ENCODE measurements at regions of chr2 and their contacts with region 1.

Region 1: GRCh38 chr2:45993476-45993991 is 303.7 kb upstream of the EPAS1 start:
- DNase-seq: peak; percentile 65 to 89 (median 73)
- ATAC-seq: peak; percentile 61 to 75 (median 68)
- H3K4me3 ChIP-seq: no peak overlapping the region
- H3K27ac ChIP-seq: peak overlapping the region; percentile 30 to 64 (median 56)
- H3K4me1 ChIP-seq: peaks cover 0 to 43% (median 21%) of the 10 kb centered on the region in 4 donors
- H3K27me3 ChIP-seq: no peaks in the 10 kb centered on the region
- CTCF ChIP-seq: peak; percentile 74 to 88 (median 80)
- POLR2A ChIP-seq: no peak

Region 2: GRCh38 chr2:45432406-45432805 is 561.1 kb before region 1 on chr2:
- intact Hi-C with region 1: no loop called
- DNase-seq: no peak
- ATAC-seq: no peak
- H3K4me3 ChIP-seq: no peak overlapping the region
- H3K27ac ChIP-seq: no peak overlapping the region
- H3K4me1 ChIP-seq: no peaks in the 10 kb centered on the region
- H3K27me3 ChIP-seq: no peaks in the 10 kb centered on the region
- CTCF ChIP-seq: no peak
- POLR2A ChIP-seq: no peak

Region 3: GRCh38 chr2:45806563-45807358 is 186.8 kb before region 1 on chr2:
- intact Hi-C with region 1: no loop called
- DNase-seq: no peak
- ATAC-seq: no peak
- H3K4me3 ChIP-seq: no peak overlapping the region
- H3K27ac ChIP-seq: no peak overlapping the region
- H3K4me1 ChIP-seq: no peaks in the 10 kb centered on the region
- H3K27me3 ChIP-seq: no peaks in the 10 kb centered on the region
- CTCF ChIP-seq: no peak
- POLR2A ChIP-seq: no peak

Region 4: GRCh38 chr2:46451131-46451711 is 457.7 kb after region 1 on chr2:
- intact Hi-C with region 1: loop called in 1 of 2 experiments (anchors 10 kb)
- DNase-seq: peak in 1 of 3 donors; percentile 59
- ATAC-seq: peak; percentile 44 to 88 (median 52)
- H3K4me3 ChIP-seq: no peak overlapping the region
- H3K27ac ChIP-seq: no peak overlapping the region
- H3K4me1 ChIP-seq: no peaks in the 10 kb centered on the region
- H3K27me3 ChIP-seq: no peaks in the 10 kb centered on the region
- CTCF ChIP-seq: no peak
- POLR2A ChIP-seq: no peak

Measured in right lobe of liver (tissue), 6 donors.